ENCODE measurements at regions of chr16 and their contacts with region 1.

Region 1: GRCh38 chr16:84617791-84618580 is at the start of gene COTL1:
- DNase-seq: peak; percentile 89 to 97
- ATAC-seq: peak; percentile 93 to 96 (median 96)
- H3K4me3 ChIP-seq: peak within 1 kb of the TSS; percentile 78
- H3K4me3 Mint-ChIP-seq: peak within 1 kb of the TSS; percentile 95
- H3K27ac ChIP-seq: peak within 1 kb of the TSS; percentile 26
- H3K27ac Mint-ChIP-seq: peak within 1 kb of the TSS; percentile 48 to 85
- H3K4me1 ChIP-seq: peaks cover 46% of the 10 kb centered on the region
- H3K4me1 Mint-ChIP-seq: peaks cover 12 to 24% of the 10 kb centered on the region in 2 donors
- H3K27me3 ChIP-seq: no peaks in the 10 kb centered on the region
- H3K27me3 Mint-ChIP-seq: peaks cover 0 to 13% of the 10 kb centered on the region in 2 donors
- CTCF ChIP-seq: no peak
- total RNA-seq, gene COTL1: 43.7 to 187 (median 116) TPM

Region 2: GRCh38 chr16:84511180-84511824 is 106.7 kb before region 1 on chr16:
- intact Hi-C with region 1: loop called (anchors 1 kb)
- DNase-seq: peak; percentile 81 to 94
- ATAC-seq: peak; percentile 53 to 72 (median 56)
- H3K4me3 ChIP-seq: no peak overlapping the region
- H3K4me3 Mint-ChIP-seq: no peak overlapping the region
- H3K27ac ChIP-seq: no peak overlapping the region
- H3K27ac Mint-ChIP-seq: no peak overlapping the region
- H3K4me1 ChIP-seq: peaks cover 67% of the 10 kb centered on the region
- H3K4me1 Mint-ChIP-seq: peaks cover 21 to 41% of the 10 kb centered on the region in 2 donors
- H3K27me3 ChIP-seq: no peaks in the 10 kb centered on the region
- H3K27me3 Mint-ChIP-seq: peaks cover 0 to 9% of the 10 kb centered on the region in 2 donors
- CTCF ChIP-seq: peak; percentile 97

Region 3: GRCh38 chr16:84593825-84594724 is 23.9 kb before region 1 on chr16:
- intact Hi-C with region 1: loop called (anchors 2 kb)
- DNase-seq: peak; percentile 70 to 94
- ATAC-seq: peak; percentile 86 to 94 (median 92)
- H3K4me3 ChIP-seq: peak overlapping the region; percentile 35
- H3K4me3 Mint-ChIP-seq: peak overlapping the region; percentile 74
- H3K27ac ChIP-seq: peak overlapping the region; percentile 91
- H3K27ac Mint-ChIP-seq: peak overlapping the region; percentile 83 to 88
- H3K4me1 ChIP-seq: peaks cover 70% of the 10 kb centered on the region
- H3K4me1 Mint-ChIP-seq: peaks cover 34 to 44% of the 10 kb centered on the region in 2 donors
- H3K27me3 ChIP-seq: no peaks in the 10 kb centered on the region
- H3K27me3 Mint-ChIP-seq: peaks cover 12 to 13% of the 10 kb centered on the region in 2 donors
- CTCF ChIP-seq: no peak

Measured in natural killer cell (primary cell).